ENCODE measurements at regions of chr6 and their contacts with region 1.

Region 1: DNA sequence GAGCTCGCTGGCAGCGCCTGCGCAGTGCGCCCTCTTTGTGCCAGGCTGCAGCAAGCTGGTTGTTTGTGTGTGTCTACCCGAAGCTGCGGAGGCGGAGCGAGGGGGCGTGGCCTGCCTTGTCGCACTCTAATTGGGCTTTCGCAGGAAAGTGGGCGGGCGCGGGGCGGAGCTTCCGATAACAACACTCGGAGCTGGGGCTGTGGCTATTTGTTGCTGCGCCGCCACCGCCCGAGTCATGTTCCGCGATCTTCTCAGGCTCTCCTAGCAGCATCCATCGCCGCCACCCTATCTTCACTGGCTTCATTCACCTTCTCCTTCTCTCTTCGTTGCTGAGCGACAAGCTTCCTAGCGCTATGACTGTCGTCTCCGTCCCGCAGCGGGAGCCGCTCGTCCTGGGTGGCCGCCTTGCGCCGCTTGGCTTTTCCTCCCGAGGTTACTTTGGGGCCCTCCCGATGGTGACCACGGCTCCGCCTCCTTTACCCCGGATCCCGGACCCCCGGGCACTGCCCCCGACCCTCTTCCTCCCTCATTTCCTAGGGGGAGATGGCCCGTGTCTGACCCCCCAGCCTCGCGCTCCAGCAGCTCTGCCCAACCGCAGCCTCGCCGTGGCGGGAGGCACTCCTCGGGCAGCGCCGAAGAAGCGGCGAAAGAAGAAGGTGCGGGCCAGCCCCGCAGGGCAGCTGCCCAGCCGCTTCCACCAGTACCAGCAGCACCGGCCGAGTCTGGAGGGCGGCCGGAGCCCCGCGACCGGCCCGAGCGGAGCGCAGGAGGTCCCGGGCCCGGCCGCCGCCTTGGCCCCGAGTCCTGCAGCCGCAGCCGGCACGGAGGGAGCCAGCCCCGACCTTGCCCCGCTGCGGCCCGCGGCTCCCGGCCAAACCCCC is at the start of gene PNRC1:
- DNase-seq: peak; percentile 100
- H3K4me3 ChIP-seq: peak within 1 kb of the TSS; percentile 100
- H3K27ac ChIP-seq: peak within 1 kb of the TSS; percentile 100
- H3K4me1 ChIP-seq: peaks cover 0 to 37% (median 30%) of the 10 kb centered on the region in 4 donors
- H3K27me3 ChIP-seq: no peaks in the 10 kb centered on the region
- CTCF ChIP-seq: no peak
- EP300 ChIP-seq: peak in 1 of 4 donors; percentile 66
- POLR2A ChIP-seq: peak; percentile 99
- total RNA-seq, gene PNRC1: 211 to 349 (median 300) TPM

Region 2: DNA sequence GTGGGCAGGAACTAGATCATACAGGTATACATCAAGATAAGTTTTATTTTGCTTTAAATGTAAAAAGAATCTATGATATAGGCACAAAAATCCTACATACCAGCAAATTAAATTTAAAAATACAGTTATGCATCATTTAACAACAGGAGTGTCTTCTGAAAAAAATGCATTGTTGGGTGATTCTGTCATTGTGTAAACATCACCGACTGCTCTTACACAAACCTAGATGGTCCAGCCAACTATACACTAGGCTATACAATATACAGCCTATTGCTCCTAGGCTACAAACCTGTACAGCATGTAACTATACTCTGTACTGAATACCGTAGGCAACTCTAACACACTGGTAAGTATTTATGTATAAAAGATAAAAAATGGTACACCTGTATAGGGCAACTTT is 256.8 kb before region 1 on chr6:
- intact Hi-C with region 1: no loop called
- DNase-seq: no peak
- H3K4me3 ChIP-seq: no peak overlapping the region
- H3K27ac ChIP-seq: no peak overlapping the region
- H3K4me1 ChIP-seq: no peaks in the 10 kb centered on the region
- H3K27me3 ChIP-seq: no peaks in the 10 kb centered on the region
- CTCF ChIP-seq: no peak
- EP300 ChIP-seq: no peak
- POLR2A ChIP-seq: no peak

Region 3: DNA sequence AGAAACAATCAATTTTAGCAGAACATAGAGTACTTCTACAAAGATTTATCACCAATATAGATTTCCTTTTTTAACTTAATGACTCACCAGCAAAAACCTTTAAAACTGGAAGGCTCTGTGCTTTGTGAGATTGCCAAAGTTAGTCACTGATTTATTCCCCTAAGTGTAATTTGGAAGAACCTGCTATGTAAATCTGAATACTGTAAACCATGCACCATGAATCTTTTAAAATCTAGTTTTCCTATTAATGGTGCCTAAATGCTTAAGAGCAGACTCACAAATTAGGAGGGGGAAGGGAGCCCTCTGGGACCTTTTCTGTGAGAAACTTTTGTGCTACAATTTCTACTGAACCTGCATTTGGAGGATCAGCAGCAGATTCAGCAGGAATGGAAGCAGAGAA is 58.0 kb before region 1 on chr6:
- intact Hi-C with region 1: loop called (anchors 1 kb)
- DNase-seq: no peak
- H3K4me3 ChIP-seq: no peak overlapping the region
- H3K27ac ChIP-seq: peak overlapping the region; percentile 78 to 89 (median 84)
- H3K4me1 ChIP-seq: peaks cover 0 to 43% (median 41%) of the 10 kb centered on the region in 4 donors
- H3K27me3 ChIP-seq: no peaks in the 10 kb centered on the region
- CTCF ChIP-seq: no peak
- EP300 ChIP-seq: peak; percentile 60 to 97 (median 95)
- POLR2A ChIP-seq: no peak

Region 4: DNA sequence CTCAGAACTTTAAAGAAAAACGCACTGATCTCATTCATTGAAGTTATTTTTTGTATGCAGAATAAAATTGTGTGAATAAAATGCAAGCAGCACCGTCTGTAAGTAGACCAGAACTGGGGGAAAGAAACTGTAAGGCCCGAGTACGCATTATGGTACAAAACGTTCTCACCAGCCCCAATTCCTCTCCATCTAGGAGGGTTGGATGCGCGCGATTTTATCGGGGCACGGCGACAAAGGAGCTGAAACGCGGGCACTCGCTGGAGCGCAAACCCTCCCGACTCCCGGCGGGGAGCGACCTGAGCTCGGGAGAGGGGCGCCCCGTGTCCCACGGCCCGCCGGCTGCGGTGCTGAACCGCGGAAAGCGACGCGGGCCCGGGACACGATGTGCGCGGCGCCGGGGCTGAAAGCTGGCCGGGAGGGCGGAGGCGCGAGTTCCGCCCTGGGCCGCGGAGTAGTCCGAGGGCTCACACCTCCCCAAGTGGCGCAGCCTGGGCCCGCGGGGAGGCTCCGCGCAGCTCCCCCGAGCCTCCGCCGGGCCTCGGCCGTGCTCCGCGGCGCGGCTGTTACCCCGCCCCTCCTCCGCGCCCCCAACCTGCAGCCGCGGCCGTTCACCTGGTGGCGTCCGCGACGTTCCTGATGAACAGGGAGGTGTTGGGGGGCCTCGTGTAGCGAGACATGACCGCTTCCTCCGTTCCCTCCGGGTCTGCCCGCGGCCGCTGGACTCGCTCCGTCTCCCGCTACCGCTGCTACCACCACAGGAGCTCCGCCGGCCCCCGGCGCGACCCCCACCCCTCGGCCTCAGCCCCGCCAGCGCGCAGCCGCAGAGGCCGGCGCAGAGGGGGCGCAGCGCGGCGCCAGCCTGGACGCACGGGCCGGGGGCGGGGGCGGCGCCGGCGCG is 36.7 kb after region 1 on chr6 and contains the start of gene SRSF12:
- intact Hi-C with region 1: loop called (anchors 2 kb)
- DNase-seq: no peak
- H3K4me3 ChIP-seq: peak within 1 kb of the TSS; percentile 55 to 79 (median 76)
- H3K27ac ChIP-seq: peak within 1 kb of the TSS; percentile 62 to 80 (median 70)
- H3K4me1 ChIP-seq: peaks cover 0 to 19% (median 9%) of the 10 kb centered on the region in 4 donors
- H3K27me3 ChIP-seq: no peaks in the 10 kb centered on the region
- CTCF ChIP-seq: peak in 1 of 4 experiments; percentile 7
- EP300 ChIP-seq: no peak
- POLR2A ChIP-seq: no peak
- total RNA-seq, gene SRSF12: 0.82 to 3.6 (median 1.1) TPM

Region 5: GRCh38 chr6:89145787-89146646 is 65.2 kb after region 1 on chr6 and contains the start of gene PM20D2:
- intact Hi-C with region 1: loop called (anchors 2 kb)
- DNase-seq: peak; percentile 83
- H3K4me3 ChIP-seq: peak within 1 kb of the TSS; percentile 75 to 91 (median 82)
- H3K27ac ChIP-seq: peak within 1 kb of the TSS; percentile 92 to 95 (median 93)
- H3K4me1 ChIP-seq: peaks cover 0 to 37% (median 31%) of the 10 kb centered on the region in 4 donors
- H3K27me3 ChIP-seq: no peaks in the 10 kb centered on the region
- CTCF ChIP-seq: no peak
- EP300 ChIP-seq: no peak
- POLR2A ChIP-seq: peak in 1 of 2 donors; percentile 19
- total RNA-seq, gene PM20D2: 20.3 to 48.5 (median 23.9) TPM

Region 6: DNA sequence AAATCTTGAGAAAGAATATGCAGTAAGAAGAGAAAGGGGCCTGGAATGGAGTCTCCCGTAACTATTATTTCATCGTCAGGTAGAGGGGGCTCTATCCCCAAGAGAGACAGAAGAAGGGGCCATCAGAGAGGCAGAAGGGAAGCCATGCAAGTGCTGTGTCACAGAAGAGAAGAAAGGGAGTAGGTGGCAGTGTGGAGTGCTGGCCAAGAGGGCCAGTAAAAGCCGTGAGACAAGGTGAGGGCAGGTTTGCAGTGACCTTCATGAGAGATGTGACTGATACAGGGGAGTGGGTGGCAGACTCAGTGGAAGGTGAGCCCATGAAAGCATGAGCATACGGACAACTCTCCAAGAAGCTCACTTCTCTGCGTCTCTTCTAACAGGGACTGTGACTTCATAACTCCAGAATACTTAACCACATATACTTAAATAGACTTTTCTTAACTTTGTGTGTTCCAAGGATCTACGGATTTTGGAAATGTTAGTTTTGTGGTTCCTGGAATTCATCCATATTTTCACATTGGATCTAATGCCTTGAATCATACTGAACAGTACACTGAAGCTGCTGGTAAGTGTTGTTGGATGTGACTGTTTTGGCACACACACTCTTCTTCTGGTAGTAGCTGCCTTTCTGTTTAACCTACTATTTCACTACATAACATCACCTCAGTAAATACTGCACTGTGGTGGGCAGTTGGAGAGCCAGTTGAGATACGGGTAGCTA is 80.7 kb after region 1 on chr6:
- intact Hi-C with region 1: loop called (anchors 5 kb)
- DNase-seq: no peak
- H3K4me3 ChIP-seq: peak overlapping the region in 2 of 4 donors; percentile 9 to 10
- H3K27ac ChIP-seq: peak overlapping the region; percentile 79 to 94 (median 86)
- H3K4me1 ChIP-seq: peaks cover 0 to 37% (median 34%) of the 10 kb centered on the region in 4 donors
- H3K27me3 ChIP-seq: no peaks in the 10 kb centered on the region
- CTCF ChIP-seq: no peak
- EP300 ChIP-seq: peak in 1 of 4 donors; percentile 35
- POLR2A ChIP-seq: no peak

Region 7: GRCh38 chr6:89352278-89353117 is 271.7 kb after region 1 on chr6 and contains the start of gene UBE2J1:
- intact Hi-C with region 1: loop called (anchors 5 kb)
- DNase-seq: peak; percentile 97
- H3K4me3 ChIP-seq: peak within 1 kb of the TSS; percentile 65 to 92 (median 72)
- H3K27ac ChIP-seq: peak within 1 kb of the TSS; percentile 94 to 99 (median 94)
- H3K4me1 ChIP-seq: peaks cover 0 to 40% (median 36%) of the 10 kb centered on the region in 4 donors
- H3K27me3 ChIP-seq: no peaks in the 10 kb centered on the region
- CTCF ChIP-seq: no peak
- EP300 ChIP-seq: no peak
- POLR2A ChIP-seq: peak; percentile 65 to 78
- total RNA-seq, gene UBE2J1: 29.5 to 36.7 (median 33.8) TPM

Measured in sigmoid colon (tissue), 7 donors.